Activated CD4-positive, alpha-beta memory T cell treated with anti-CD3 and anti-CD28 coated beads for 36 hours (primary cell): ENCODE measurements at regions of chr18 and their contacts with region 1.

Region 1: DNA sequence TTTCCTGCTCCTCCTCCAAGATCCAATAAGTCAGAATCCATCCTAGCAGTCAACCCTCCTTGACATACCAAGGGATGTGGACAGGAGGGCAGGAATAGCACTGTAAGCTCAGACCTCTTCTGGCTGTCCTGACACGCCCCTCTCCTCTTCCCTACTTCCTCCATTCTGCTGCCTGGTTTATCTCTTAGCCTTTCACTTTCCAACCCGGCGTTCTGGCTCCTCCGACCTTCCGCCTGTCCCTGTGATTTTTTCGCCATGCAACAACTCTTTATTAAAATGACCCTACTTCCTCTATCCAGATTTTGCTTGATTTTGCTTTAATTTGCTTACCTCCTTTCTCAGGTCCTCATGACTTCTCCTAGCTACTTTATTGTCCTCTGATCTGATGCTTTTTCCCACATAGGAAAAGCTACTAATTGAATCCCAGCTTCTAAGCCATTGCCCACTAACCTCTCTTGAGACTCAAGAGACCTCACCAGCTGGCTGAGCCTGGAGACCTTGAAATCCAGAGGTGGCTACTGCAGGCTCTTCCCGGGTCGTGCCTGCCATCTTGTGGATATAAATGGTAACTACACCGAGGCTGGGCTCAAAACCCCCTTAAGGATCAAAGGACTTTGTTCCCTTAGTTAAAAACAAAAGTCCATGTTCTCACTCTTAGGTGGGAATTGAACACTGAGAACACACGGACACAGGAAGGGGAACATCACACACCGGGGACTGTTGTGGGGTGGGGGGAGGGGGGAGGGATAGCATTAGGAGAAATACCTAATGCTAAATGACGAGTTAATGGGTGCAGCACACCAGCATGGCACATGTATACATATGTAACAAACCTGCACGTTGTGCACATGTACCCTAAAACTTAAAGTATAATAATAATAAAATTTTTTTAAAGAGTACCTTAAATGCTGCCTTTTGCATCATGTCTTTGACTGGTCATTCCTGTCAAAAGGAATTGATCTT is 139.4 kb downstream of the AKAIN1 start:
- DNase-seq: peak; percentile 60
- H3K4me3 Mint-ChIP-seq: no peak overlapping the region
- H3K27ac Mint-ChIP-seq: no peak overlapping the region
- H3K4me1 Mint-ChIP-seq: peaks cover 13% of the 10 kb centered on the region
- H3K27me3 Mint-ChIP-seq: no peaks in the 10 kb centered on the region

Region 2: GRCh38 chr18:4106407-4107033 is 951.1 kb before region 1 on chr18:
- CTCF ChIA-PET with region 1: interaction called, 49 read pairs
- POLR2A ChIA-PET with region 1: no interaction called
- intact Hi-C with region 1: loop called (anchors 1 kb)
- DNase-seq: peak; percentile 70
- H3K4me3 Mint-ChIP-seq: no peak overlapping the region
- H3K27ac Mint-ChIP-seq: no peak overlapping the region
- H3K4me1 Mint-ChIP-seq: no peaks in the 10 kb centered on the region
- H3K27me3 Mint-ChIP-seq: no peaks in the 10 kb centered on the region

Region 3: DNA sequence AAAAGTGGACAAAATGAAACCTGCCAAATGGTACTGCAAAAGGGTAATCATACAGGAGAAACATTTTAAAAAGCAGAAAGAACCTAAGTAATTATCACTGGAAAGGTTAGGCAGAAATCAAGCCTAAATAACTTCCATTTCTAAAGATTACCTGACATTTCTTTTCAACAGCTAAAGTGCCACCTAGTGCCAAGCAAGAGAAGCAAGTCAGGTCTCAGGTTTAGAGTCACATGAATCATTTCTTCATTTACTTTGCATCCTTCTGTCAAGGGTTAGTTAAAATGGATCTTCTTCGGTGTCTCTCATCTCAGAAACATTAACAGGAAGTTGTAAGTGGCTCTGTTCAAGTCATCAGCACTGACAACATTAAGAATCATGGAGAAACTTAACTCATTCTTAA is 49.1 kb after region 1 on chr18:
- CTCF ChIA-PET with region 1: no interaction called
- POLR2A ChIA-PET with region 1: no interaction called
- intact Hi-C with region 1: no loop called
- DNase-seq: no peak
- H3K4me3 Mint-ChIP-seq: no peak overlapping the region
- H3K27ac Mint-ChIP-seq: no peak overlapping the region
- H3K4me1 Mint-ChIP-seq: no peaks in the 10 kb centered on the region
- H3K27me3 Mint-ChIP-seq: peaks cover 1% of the 10 kb centered on the region